ENCODE measurements at regions of chr10 and their contacts with region 1.

Region 1: DNA sequence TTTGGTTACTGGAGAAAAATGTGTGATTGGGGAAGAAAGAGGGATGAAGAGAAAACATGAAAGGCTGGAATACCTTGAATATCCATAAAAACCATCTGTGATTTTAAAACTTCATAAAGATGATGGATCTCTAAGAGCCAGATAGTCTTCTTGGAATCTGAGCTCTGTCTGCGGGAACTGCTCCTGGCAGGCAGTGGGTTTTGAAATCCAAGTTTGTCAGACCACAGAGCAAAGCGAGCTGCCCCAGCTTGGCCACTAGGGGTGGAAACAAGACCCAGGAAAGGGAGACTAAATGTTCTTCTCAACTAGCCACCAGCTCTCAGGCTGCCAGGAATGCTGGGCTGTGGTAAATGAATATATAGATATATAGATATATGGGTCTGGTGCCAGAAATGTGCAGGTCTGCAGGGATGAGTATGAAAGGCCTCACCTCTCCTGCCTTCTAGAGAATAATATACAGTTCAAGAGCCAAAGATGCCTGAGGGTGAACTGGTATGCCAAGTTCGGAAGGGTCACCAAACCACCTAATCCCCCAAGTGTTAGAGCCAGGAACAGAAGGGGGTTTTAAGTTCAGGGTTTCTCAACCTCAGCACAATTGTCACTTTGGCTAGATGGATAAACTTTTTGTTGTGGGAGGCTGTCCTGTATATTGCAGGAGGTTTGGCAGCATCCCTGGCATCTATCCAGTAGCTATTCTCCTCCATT is 208.8 kb downstream of the KCNMA1 start:
- DNase-seq: peak; percentile 59
- ATAC-seq: peak; percentile 80
- H3K4me3 Mint-ChIP-seq: no peak overlapping the region
- H3K27ac Mint-ChIP-seq: peak overlapping the region; percentile 0; the same call in 1 of the 2 replicates
- H3K4me1 Mint-ChIP-seq: peaks cover 23% of the 10 kb centered on the region
- H3K27me3 Mint-ChIP-seq: no peaks in the 10 kb centered on the region
- CTCF ChIP-seq: peak; percentile 33

Region 2: DNA sequence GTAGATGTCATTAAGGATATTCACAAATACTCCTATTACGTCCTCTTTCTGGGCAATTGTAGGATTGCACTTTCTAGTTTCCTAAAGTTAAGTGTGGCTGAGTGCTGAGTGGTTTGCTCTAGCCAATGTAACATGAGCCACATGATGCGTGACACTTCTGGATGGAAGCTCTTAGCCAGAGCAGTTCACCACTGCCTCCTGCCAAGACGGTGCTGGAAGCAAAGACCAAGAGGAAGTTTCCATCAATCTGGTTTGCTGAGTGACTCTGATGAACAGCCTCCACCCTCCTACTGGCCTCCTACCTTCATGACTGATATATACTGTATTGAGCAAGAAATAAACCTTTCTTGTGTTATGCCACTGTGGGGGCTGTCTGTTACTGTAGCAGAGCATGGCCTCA is 109.3 kb before region 1 on chr10:
- CTCF ChIA-PET with region 1: no interaction called
- POLR2A ChIA-PET with region 1: no interaction called
- DNase-seq: no peak
- ATAC-seq: no peak
- H3K4me3 Mint-ChIP-seq: no peak overlapping the region
- H3K27ac Mint-ChIP-seq: no peak overlapping the region
- H3K4me1 Mint-ChIP-seq: peaks cover 12% of the 10 kb centered on the region
- H3K27me3 Mint-ChIP-seq: peaks cover 12% of the 10 kb centered on the region
- CTCF ChIP-seq: no peak

Region 3: GRCh38 chr10:77416311-77417135 is 12.3 kb before region 1 on chr10:
- CTCF ChIA-PET with region 1: interaction called, 26 read pairs
- POLR2A ChIA-PET with region 1: no interaction called
- DNase-seq: no peak
- ATAC-seq: no peak
- H3K4me3 Mint-ChIP-seq: no peak overlapping the region
- H3K27ac Mint-ChIP-seq: no peak overlapping the region
- H3K4me1 Mint-ChIP-seq: peaks cover 9% of the 10 kb centered on the region; the same call in 1 of the 2 replicates
- H3K27me3 Mint-ChIP-seq: no peaks in the 10 kb centered on the region
- CTCF ChIP-seq: no peak

Region 4: DNA sequence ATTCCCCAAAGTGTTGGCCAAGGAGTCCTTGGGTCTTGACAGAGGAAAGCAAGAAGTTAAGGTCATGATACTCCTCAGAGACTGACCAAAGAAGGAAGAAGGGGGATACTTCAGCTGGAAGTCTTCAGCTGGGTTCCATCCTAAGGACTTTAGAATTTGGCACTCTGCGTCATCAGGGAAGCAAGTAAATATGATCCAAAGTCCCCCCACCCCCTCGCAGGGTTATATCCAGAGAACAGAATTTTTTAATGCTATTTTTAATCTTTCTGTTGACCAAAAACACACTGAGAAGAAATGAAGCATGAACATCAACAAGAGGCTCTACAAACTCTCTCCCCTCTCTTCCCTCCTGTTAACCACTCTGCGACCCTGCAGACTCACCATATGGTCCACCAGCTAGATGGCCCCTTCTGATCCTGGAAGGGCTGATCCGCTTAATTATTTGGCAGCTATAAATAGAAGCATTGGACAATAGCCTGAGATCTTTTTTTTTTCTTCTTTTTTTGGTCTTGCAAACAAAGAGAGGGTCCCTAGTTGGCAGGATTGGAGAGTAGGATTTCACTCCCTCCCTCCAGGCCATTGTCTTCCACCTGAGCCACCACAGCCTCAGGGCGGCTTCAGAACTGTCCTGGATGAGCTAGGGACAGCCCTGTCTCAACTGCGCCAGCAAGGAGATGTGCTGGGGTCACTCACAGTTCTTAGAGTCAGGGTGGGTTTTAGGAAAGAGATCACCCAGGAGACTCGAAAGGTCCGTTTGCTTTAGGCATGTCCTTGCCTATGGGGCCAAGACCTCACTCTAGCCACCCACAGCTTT is 12.7 kb after region 1 on chr10:
- CTCF ChIA-PET with region 1: interaction called, 10 read pairs
- POLR2A ChIA-PET with region 1: no interaction called
- DNase-seq: peak; percentile 12
- ATAC-seq: peak; percentile 32
- H3K4me3 Mint-ChIP-seq: no peak overlapping the region
- H3K27ac Mint-ChIP-seq: no peak overlapping the region
- H3K4me1 Mint-ChIP-seq: peaks cover 9% of the 10 kb centered on the region
- H3K27me3 Mint-ChIP-seq: no peaks in the 10 kb centered on the region
- CTCF ChIP-seq: no peak

Region 5: GRCh38 chr10:77448226-77448625 is 19.4 kb after region 1 on chr10:
- CTCF ChIA-PET with region 1: interaction called, 10 read pairs
- POLR2A ChIA-PET with region 1: no interaction called
- DNase-seq: no peak
- ATAC-seq: no peak
- H3K4me3 Mint-ChIP-seq: no peak overlapping the region
- H3K27ac Mint-ChIP-seq: no peak overlapping the region
- H3K4me1 Mint-ChIP-seq: peaks cover 15% of the 10 kb centered on the region
- H3K27me3 Mint-ChIP-seq: no peaks in the 10 kb centered on the region
- CTCF ChIP-seq: no peak

Region 6: DNA sequence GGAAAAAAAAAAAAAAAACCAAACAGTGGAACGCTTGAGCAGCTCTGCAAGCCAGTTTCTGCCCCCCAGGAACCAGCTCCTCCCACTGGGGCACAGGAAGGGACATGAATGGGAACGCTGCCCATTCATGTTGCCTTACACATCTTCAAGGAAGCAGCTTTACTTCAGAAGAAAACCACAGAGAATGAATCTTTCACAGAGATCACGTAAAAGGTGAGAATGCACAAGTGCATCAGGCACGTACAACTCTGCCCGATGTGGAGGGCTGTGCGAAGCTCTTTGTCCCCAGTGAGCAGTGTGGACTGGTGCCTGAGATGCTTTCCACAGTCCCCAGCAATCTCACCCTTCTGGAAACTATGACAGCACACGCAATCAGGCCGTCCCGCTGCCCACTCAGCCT is 391.5 kb after region 1 on chr10:
- CTCF ChIA-PET with region 1: no interaction called
- POLR2A ChIA-PET with region 1: no interaction called
- DNase-seq: no peak
- ATAC-seq: no peak
- H3K4me3 Mint-ChIP-seq: no peak overlapping the region
- H3K27ac Mint-ChIP-seq: peak overlapping the region; percentile 72; the same call in 1 of the 2 replicates
- H3K4me1 Mint-ChIP-seq: no peaks in the 10 kb centered on the region
- H3K27me3 Mint-ChIP-seq: no peaks in the 10 kb centered on the region
- CTCF ChIP-seq: no peak

Measured in WTC11 (cell line).